HCT116 (cell line): ENCODE measurements at regions of chrX and their contacts with region 1.

Region 1: DNA sequence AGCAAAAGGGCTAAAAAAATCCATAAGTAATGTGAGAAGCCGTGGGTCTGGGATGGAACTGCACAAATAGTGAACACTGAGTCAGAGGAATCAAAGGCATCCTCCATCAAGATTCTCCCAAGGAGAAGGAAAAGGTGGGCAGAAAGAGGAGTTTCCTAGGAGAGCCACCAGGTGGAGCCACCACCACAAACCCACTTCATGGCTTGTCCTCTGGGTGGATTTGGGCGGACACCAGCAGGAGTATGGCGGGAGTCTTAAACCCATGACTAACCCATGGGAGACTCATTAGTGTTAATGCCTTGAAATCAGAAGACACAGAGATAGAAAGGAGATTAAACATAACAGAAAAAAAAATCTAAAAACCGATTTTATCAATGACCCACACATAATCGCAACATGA is 147.7 kb downstream of the SH3KBP1 start:
- DNase-seq: peak; percentile 32
- ATAC-seq: peak; percentile 88
- H3K4me3 ChIP-seq: no peak overlapping the region
- H3K27ac ChIP-seq: no peak overlapping the region
- H3K4me1 ChIP-seq: no peaks in the 10 kb centered on the region
- H3K27me3 ChIP-seq: no peaks in the 10 kb centered on the region
- CTCF ChIP-seq: peak; percentile 62 to 65 (median 65)
- POLR2A ChIP-seq: no peak
- RAD21 ChIP-seq: peak; percentile 76

Region 2: GRCh38 chrX:18721683-18722499 is 1017.8 kb before region 1 on chrX:
- CTCF ChIA-PET with region 1: no interaction called
- POLR2A ChIA-PET with region 1: no interaction called
- RAD21 ChIA-PET with region 1: no interaction called
- intact Hi-C with region 1: no loop called
- DNase-seq: no peak
- ATAC-seq: no peak
- H3K4me3 ChIP-seq: no peak overlapping the region
- H3K27ac ChIP-seq: no peak overlapping the region
- H3K4me1 ChIP-seq: no peaks in the 10 kb centered on the region
- H3K27me3 ChIP-seq: no peaks in the 10 kb centered on the region
- CTCF ChIP-seq: no peak
- POLR2A ChIP-seq: no peak
- RAD21 ChIP-seq: no peak

Region 3: GRCh38 chrX:20066968-20067708 is 327.5 kb after region 1 on chrX:
- CTCF ChIA-PET with region 1: no interaction called
- POLR2A ChIA-PET with region 1: no interaction called
- RAD21 ChIA-PET with region 1: no interaction called
- intact Hi-C with region 1: loop called (anchors 10 kb)
- DNase-seq: peak; percentile 38
- ATAC-seq: peak; percentile 88
- H3K4me3 ChIP-seq: no peak overlapping the region
- H3K27ac ChIP-seq: no peak overlapping the region
- H3K4me1 ChIP-seq: peaks cover 5 to 17% of the 10 kb centered on the region in 2 experiments
- H3K27me3 ChIP-seq: no peaks in the 10 kb centered on the region
- CTCF ChIP-seq: peak; percentile 50 to 69 (median 61); a peak in 5 of 6 replicates
- POLR2A ChIP-seq: no peak
- RAD21 ChIP-seq: peak; percentile 79

Region 4: DNA sequence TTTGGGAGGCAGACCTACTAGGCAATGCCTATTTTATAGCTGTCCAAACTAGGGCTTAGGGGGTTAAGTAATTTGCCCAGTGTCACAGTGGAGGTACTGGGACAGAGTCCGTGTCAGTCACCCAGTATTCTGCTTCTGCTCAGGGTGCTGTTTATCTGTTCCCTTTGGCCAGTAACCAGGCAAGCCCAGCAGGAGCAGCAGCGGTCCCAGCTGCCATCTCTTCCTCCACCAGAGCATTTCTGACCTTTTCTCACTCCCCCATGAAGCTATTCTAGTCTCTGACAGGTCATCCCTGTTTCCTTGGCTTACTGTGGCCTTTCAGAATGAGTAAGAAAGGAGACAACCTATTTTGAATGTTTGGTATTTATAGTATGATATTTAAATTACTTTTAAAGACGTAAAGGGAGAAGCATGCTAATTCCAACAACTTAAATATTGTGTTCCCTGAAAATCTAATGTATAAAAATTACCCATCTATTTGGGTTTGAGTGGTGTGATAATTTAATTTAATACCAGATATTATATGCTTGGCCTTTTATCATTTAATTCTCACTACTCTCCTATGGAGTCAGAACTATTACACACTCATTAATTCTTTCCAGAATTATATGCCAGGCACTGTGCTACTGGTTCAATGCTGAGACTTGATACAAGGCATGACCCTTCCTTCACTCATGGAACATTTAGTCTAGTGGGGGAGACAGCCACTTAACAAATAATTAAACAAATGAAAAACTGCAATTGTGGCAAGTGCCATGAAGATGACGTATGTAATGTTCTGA is 466.4 kb after region 1 on chrX:
- CTCF ChIA-PET with region 1: no interaction called
- POLR2A ChIA-PET with region 1: no interaction called
- RAD21 ChIA-PET with region 1: no interaction called
- intact Hi-C with region 1: no loop called
- DNase-seq: no peak
- ATAC-seq: no peak
- H3K4me3 ChIP-seq: no peak overlapping the region
- H3K27ac ChIP-seq: no peak overlapping the region
- H3K4me1 ChIP-seq: no peaks in the 10 kb centered on the region
- H3K27me3 ChIP-seq: no peaks in the 10 kb centered on the region
- CTCF ChIP-seq: no peak
- POLR2A ChIP-seq: no peak
- RAD21 ChIP-seq: no peak

Region 5: DNA sequence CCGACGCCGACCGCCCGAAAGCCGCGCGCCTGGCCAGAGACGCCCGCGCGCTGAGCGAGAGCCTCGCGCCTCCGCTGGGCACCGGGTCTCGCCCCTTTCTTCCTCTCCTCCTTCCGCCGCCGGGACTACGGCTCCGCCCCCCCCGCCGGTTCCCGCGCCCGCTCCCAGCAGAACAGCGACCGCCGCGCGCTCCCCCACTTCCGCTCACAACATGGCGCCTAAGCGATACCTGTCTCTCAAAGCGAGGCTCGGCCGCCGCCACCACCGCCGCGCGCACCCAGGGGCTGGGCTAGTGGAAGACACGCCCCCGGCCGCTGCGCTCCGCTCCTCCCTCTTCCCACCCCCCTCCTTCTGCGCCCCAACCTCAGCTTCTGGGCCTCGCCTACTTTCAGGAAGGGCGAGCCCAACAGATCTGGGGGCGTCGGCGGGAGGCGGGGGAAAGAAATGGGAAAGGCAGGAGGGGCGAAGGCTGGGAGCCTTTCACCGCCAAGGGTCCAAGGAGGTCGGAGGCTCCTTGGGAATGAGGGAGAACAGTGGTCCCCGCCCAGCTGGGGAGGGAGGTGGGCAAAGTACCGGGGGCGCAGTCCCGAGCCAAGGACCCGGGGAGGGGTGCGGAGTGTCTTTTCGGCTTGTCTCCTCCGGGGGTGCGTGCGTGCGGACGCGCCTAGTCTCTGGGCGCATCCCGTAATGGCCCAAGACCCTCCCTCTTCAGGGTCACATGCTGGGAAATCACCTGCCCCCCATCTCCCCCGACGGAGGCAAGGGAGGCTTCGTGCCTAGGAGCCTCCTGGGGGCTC is 527.3 kb after region 1 on chrX and contains the start of gene RPS6KA3:
- CTCF ChIA-PET with region 1: no interaction called
- POLR2A ChIA-PET with region 1: no interaction called
- RAD21 ChIA-PET with region 1: no interaction called
- intact Hi-C with region 1: no loop called
- DNase-seq: peak; percentile 57
- ATAC-seq: peak; percentile 90
- H3K4me3 ChIP-seq: peak within 1 kb of the TSS; percentile 66 to 74
- H3K27ac ChIP-seq: peak within 1 kb of the TSS; percentile 60
- H3K4me1 ChIP-seq: peaks cover 4 to 19% of the 10 kb centered on the region in 2 experiments
- H3K27me3 ChIP-seq: no peaks in the 10 kb centered on the region
- CTCF ChIP-seq: no peak
- POLR2A ChIP-seq: no peak
- RAD21 ChIP-seq: no peak
- total RNA-seq, gene RPS6KA3: 35.5 TPM